HCT116 (cell line): ENCODE measurements at regions of chr7 and their contacts with region 1.

Region 1: GRCh38 chr7:36151921-36152755 is 916 bp upstream of the EEPD1 start:
- DNase-seq: no peak
- ATAC-seq: no peak; the same call in 1 of the 2 replicates
- H3K4me3 ChIP-seq: peak overlapping the region; percentile 47 to 83
- H3K27ac ChIP-seq: peak overlapping the region; percentile 43; the same call in 1 of the 2 replicates
- H3K4me1 ChIP-seq: peaks cover 8 to 16% of the 10 kb centered on the region in 2 experiments
- H3K27me3 ChIP-seq: no peaks in the 10 kb centered on the region
- CTCF ChIP-seq: no peak
- POLR2A ChIP-seq: no peak
- RAD21 ChIP-seq: no peak

Region 2: GRCh38 chr7:36107926-36108631 is 44.1 kb before region 1 on chr7:
- CTCF ChIA-PET with region 1: interaction called, 5 read pairs
- POLR2A ChIA-PET with region 1: no interaction called
- RAD21 ChIA-PET with region 1: no interaction called
- intact Hi-C with region 1: loop called (anchors 2 kb)
- DNase-seq: no peak
- ATAC-seq: peak; percentile 55
- H3K4me3 ChIP-seq: no peak overlapping the region
- H3K27ac ChIP-seq: no peak overlapping the region
- H3K4me1 ChIP-seq: no peaks in the 10 kb centered on the region; a peak in 1 of 4 replicates
- H3K27me3 ChIP-seq: no peaks in the 10 kb centered on the region
- CTCF ChIP-seq: no peak
- POLR2A ChIP-seq: no peak
- RAD21 ChIP-seq: no peak